ENCODE measurements at regions of chr7 and their contacts with region 1.

Region 1: DNA sequence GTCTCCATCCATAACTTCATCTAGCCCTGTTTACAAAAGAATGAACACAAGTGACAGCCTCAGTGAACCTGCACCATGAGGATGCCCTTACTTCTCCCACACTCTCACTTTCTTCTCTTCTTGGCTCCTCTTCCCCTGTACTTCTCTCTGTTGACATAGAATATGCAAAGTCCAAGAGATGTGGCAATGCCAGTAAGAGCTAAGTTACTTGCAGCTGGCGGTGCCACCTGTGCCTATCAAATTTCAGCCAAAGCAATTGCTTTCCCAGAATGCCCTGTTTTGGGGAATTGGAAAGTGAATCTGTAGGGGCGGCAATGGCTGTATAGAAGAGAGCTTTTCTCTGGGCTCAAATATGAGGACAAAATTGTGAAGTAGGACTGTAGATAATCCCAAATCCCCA is 557.8 kb downstream of the AUTS2 start:
- DNase-seq: no peak

Region 2: GRCh38 chr7:70040970-70041766 is 114.9 kb before region 1 on chr7:
- intact Hi-C with region 1: loop called (anchors 5 kb)
- DNase-seq: no peak

Region 3: DNA sequence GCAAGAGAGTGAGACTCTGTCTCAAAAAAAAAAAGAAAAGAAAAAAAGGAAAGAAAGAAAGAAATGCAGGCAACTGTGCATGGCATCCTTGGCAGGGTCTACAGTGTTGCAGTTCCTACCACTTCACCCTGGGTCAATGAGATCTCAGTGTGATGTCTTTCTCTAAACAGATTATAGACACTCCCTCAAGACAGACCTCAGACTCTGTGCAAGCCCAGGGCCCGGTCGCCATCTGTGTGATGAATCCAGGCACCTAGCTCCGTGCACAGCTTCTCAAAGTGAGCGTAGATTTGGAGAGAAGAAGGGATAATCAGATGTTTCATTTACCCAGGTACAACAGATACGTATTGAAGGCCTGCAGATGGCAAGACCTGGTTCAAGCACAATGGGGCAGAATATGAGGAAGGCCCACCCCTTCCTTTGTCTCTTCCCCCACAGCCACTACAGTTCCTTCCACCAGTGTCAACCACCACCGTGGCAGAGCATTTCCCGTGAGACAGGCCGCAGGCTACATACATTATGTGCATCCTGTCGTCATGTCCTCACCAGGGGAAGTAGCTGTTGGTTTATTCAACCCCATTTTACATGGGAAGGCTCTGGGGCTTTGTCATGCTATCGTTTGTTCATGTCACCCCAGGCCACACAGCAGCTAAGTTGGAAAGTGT is 504.2 kb after region 1 on chr7:
- intact Hi-C with region 1: no loop called
- DNase-seq: no peak

Measured in cardiac septum (tissue), 1 donor.